Dorsolateral prefrontal cortex (tissue), 120 donors: ENCODE measurements at regions of chr2 and their contacts with region 1.

Region 1: GRCh38 chr2:178914259-178914849 is 107.1 kb upstream of the TTN start:
- DNase-seq: peak; percentile 37 to 88 (median 78)
- H3K4me3 ChIP-seq: no peak overlapping the region
- H3K27ac ChIP-seq: no peak overlapping the region
- H3K27me3 ChIP-seq: peaks cover 0 to 3% (median 0%) of the 10 kb centered on the region in 45 donors
- CTCF ChIP-seq: peak; percentile 52 to 97 (median 88)

Region 2: GRCh38 chr2:178700922-178701342 is 213.4 kb before region 1 on chr2:
- intact Hi-C with region 1: no loop called
- DNase-seq: no peak
- H3K4me3 ChIP-seq: no peak overlapping the region
- H3K27ac ChIP-seq: no peak overlapping the region
- H3K27me3 ChIP-seq: no peaks in the 10 kb centered on the region
- CTCF ChIP-seq: peak; percentile 29 to 70 (median 53)

Region 3: DNA sequence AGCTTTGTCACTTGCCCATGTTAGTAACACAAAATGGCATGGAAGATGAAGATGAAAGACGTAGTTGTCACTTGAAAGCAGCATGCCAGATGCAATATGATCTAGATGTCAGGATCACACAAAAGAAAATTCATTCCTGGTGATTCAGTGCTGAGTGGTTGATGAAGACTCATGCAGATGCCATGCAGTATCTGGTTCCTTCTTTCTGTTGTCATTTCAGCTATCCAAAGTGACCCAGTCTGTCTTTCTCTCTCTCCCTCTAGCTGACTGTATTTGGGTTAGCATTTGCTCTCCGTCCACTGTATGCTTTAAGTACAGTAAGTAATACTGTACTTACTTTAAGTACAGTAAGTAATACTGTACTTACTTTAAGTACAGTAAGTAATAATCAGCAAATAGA is 157.5 kb before region 1 on chr2:
- intact Hi-C with region 1: no loop called
- DNase-seq: no peak
- H3K4me3 ChIP-seq: no peak overlapping the region
- H3K27ac ChIP-seq: no peak overlapping the region
- H3K27me3 ChIP-seq: no peaks in the 10 kb centered on the region
- CTCF ChIP-seq: no peak

Region 4: GRCh38 chr2:178796079-178796677 is 118.2 kb before region 1 on chr2:
- intact Hi-C with region 1: loop called (anchors 2 to 5 kb)
- DNase-seq: no peak
- H3K4me3 ChIP-seq: no peak overlapping the region
- H3K27ac ChIP-seq: no peak overlapping the region
- H3K27me3 ChIP-seq: peaks cover 0 to 2% (median 0%) of the 10 kb centered on the region in 45 donors
- CTCF ChIP-seq: peak; percentile 65 to 91 (median 76)